Left cardiac atrium (tissue), 4 donors: ENCODE measurements at regions of chr3 and their contacts with region 1.

Region 1: DNA sequence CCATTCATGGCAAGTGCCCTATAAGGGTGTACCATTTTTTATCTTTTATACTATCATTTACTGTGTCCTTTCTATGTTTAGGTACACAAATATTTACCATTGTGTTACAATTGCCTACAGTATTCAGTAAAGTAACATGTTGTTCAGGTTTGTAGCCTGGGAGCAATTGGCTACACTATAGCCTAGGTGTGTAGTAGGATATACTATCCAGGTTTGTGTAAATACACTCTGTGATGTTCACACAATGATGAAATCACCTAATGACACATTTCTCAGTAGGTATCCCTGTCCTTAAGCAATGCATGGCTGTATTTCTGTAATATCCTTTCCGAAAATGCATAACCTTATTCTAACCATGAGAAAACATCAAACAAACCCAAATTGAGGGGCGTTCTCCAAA is 17.9 kb upstream of the CNOT10 start:
- DNase-seq: no peak
- ATAC-seq: no peak

Region 2: DNA sequence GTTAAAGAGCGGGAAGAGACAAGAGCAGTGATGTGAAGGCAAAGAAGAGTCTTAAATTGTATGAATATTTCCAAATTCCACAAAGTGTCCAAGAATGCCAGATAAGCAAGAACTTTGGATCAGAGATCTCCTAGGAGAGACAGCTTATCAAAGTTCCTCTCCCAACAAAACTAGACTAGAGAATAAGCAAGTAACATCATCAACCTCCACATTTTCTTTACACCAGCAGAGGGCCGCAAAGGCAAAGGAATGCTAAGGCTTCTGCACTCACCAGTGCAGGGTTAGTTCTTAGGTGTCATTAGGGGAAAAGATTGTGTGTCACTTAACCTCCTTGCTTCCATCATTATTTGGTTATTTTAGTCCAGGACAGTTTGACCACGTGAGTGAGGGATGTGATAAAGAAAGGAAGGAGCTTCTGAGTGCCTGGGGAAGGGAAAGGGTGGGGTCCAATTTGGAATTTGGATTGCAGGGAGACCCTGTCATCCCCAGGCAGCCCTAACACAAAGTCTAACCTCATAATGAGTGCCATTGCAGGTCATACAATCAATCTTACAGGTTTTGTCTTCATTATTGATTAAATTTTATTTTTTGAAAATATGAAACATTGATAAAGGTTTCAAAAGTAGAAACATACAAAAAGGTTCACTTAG is 156.9 kb before region 1 on chr3:
- intact Hi-C with region 1: loop called (anchors 2 to 5 kb)
- DNase-seq: peak; percentile 51
- ATAC-seq: peak; percentile 94

Region 3: GRCh38 chr3:32703491-32703972 is 36.4 kb after region 1 on chr3:
- intact Hi-C with region 1: no loop called
- DNase-seq: no peak
- ATAC-seq: no peak

Region 4: DNA sequence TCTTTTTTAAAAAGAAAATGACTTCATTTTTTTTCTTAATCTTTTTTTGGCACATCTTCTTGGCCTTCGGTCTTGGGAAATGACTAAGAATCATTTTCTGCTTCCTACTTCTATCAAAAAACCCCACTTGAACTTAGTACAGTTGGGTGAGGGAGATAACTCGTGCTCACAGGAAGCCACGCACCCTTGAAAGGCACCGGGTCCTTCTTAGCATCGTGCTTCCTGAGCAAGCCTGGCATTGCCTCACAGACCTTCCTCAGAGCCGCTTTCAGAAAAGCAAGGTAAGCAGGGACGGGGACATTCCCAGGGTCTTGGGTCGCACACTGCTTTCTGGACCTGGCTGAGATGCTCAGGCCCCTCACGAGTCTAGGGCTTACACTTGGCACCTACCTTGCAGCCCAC is 284.3 kb after region 1 on chr3 and contains the start of gene CCR4:
- intact Hi-C with region 1: no loop called
- DNase-seq: no peak
- ATAC-seq: peak; percentile 46 to 52
- total RNA-seq, gene CCR4: 0.16 to 0.24 TPM